Aorta (tissue), 5 donors: ENCODE measurements at regions of chr9 and their contacts with region 1.

Region 1: GRCh38 chr9:74577956-74578355 is 80.8 kb downstream of the RORB start:
- DNase-seq: no peak
- ATAC-seq: no peak
- H3K4me3 ChIP-seq: no peak overlapping the region
- H3K27ac ChIP-seq: no peak overlapping the region
- H3K4me1 ChIP-seq: no peaks in the 10 kb centered on the region
- H3K27me3 ChIP-seq: no peaks in the 10 kb centered on the region

Region 2: DNA sequence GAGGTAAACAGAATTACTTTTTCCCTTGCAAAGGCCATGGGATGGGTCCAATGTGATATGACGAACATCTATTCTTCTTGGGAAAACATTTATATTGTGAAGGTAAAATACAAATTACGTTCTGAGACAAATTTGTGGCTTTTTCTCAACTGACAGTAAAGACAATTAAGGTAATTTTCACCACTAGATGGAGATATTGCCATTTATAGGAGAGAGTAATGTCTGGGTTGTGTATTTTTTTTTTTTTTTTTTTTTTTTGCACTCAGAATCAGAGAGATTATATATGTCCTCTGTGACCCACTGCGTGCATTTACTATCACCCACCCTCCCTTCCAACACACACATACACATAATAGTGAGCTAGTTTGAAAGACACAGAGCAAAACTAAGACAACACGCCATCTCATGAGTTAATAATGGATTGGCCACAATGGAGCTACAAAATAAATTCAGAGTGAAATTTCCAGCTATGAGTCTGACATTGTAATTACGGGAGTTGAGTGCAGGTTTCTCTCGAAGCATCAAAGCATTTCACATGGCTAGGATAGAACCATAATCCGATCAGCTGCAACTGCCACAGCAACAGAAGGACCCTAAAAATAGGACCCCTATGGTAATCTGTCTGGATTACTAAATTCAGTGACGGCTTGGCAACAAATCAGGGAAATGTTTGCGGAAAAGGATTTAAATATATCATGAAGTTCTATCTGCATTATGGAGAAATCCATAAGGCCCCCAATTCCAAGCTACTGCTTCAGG is 1377.1 kb before region 1 on chr9:
- intact Hi-C with region 1: loop called in 1 of 2 experiments (anchors 5 kb)
- DNase-seq: no peak
- ATAC-seq: no peak
- H3K4me3 ChIP-seq: no peak overlapping the region
- H3K27ac ChIP-seq: no peak overlapping the region
- H3K4me1 ChIP-seq: no peaks in the 10 kb centered on the region
- H3K27me3 ChIP-seq: no peaks in the 10 kb centered on the region